MCF 10A (cell line): ENCODE measurements at regions of chr18 and their contacts with region 1.

Region 1: DNA sequence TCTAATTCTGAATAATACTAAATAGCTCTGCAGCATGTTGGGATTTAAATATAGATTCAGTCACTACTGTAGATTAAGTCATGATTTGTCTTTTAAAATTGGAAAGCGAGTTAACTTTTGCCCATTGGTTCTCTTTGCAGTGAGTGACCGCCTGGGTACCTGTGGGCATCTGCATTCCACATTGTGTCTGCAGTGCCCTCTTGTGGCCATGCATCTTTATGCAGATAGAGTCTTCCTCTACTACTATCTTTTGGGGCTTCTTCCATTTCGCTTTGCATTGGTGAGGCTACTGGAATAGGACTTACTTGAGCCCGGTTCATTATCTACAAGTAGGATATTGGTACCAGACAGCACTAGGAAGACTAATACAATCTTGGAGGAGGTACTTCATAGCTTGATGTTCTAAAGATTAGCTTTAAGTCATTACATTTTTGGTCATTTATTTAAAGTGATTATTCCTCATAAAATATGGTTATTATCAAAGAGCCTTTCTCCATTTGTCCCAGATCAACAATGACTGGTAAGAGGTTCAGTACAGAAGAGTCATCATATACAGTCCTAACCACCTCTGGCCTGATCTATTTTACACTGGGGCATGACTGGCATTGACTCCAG is 203.0 kb downstream of the SOCS6 start:
- DNase-seq: peak; percentile 79
- H3K4me3 Mint-ChIP-seq: no peak overlapping the region
- H3K27ac Mint-ChIP-seq: no peak overlapping the region
- H3K4me1 Mint-ChIP-seq: peaks cover 8% of the 10 kb centered on the region
- H3K27me3 Mint-ChIP-seq: no peaks in the 10 kb centered on the region
- CTCF ChIP-seq: peak; percentile 81

Region 2: GRCh38 chr18:70464343-70465114 is 27.3 kb before region 1 on chr18:
- CTCF ChIA-PET with region 1: interaction called, 5 read pairs
- POLR2A ChIA-PET with region 1: no interaction called
- intact Hi-C with region 1: loop called (anchors 1 kb)
- DNase-seq: peak; percentile 74
- H3K4me3 Mint-ChIP-seq: no peak overlapping the region
- H3K27ac Mint-ChIP-seq: no peak overlapping the region
- H3K4me1 Mint-ChIP-seq: peaks cover 7% of the 10 kb centered on the region
- H3K27me3 Mint-ChIP-seq: no peaks in the 10 kb centered on the region
- CTCF ChIP-seq: peak; percentile 13

Region 3: DNA sequence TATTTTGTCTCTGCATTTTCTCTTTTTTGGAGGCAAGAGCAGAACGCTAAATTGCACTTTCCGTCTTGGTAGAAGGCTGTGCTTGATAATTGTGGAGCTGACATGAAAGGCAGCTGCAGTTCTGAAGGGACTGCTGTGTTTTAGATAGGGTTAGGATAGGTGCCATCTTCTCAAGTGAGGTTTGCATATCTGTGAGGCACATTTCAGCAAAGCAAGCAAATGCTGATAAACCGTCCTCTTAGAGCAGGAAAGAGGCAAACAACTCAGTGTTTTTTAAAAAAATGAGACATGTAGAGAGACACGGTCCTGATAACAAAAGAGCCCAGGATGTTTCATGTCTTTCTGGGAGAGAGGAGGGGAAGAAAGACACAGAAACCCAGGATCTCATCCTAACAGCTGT is 14.7 kb after region 1 on chr18:
- CTCF ChIA-PET with region 1: interaction called, 30 read pairs
- POLR2A ChIA-PET with region 1: no interaction called
- intact Hi-C with region 1: no loop called
- DNase-seq: no peak
- H3K4me3 Mint-ChIP-seq: no peak overlapping the region
- H3K27ac Mint-ChIP-seq: no peak overlapping the region
- H3K4me1 Mint-ChIP-seq: no peaks in the 10 kb centered on the region
- H3K27me3 Mint-ChIP-seq: peaks cover 42% of the 10 kb centered on the region
- CTCF ChIP-seq: no peak